Common myeloid progenitor, CD34-positive (primary cell): ENCODE measurements at regions of chr1 and their contacts with region 1.

Region 1: GRCh38 chr1:921011-921837 is 2.5 kb upstream of the SAMD11 start:
- DNase-seq: peak; percentile 77 to 88 (median 87)
- H3K4me3 ChIP-seq: peak overlapping the region in 4 of 7 experiments; percentile 6 to 42 (median 30)
- H3K27ac ChIP-seq: no peak overlapping the region
- H3K4me1 ChIP-seq: peaks cover 0 to 74% (median 62%) of the 10 kb centered on the region in 4 experiments
- H3K27me3 ChIP-seq: peaks cover 0 to 50% (median 14%) of the 10 kb centered on the region in 5 experiments

Region 2: DNA sequence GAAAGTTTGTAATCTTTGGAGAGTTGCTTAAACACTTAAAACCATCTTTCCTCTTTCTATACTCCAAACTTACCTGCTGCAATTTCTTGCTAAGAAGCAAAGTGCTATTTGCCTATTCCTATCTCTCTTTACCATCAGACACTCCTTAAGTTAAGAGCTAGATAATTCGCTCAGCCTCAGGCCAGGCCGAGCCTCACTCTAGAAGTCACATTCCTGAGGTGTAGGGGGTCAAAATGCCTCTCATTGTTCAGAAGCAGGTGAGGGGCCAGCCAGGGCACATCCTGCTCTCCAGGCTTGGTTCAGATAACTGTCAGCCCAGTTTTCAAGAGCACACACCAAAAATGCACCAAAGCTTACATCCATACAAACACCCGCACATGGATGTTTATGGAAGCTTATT is 75.6 kb before region 1 on chr1:
- CTCF ChIA-PET with region 1: no interaction called
- POLR2A ChIA-PET with region 1: no interaction called
- DNase-seq: no peak
- H3K4me3 ChIP-seq: no peak overlapping the region
- H3K27ac ChIP-seq: no peak overlapping the region
- H3K4me1 ChIP-seq: no peaks in the 10 kb centered on the region
- H3K27me3 ChIP-seq: no peaks in the 10 kb centered on the region

Region 3: GRCh38 chr1:886760-887159 is 34.5 kb before region 1 on chr1:
- CTCF ChIA-PET with region 1: no interaction called
- POLR2A ChIA-PET with region 1: no interaction called
- DNase-seq: no peak
- H3K4me3 ChIP-seq: no peak overlapping the region
- H3K27ac ChIP-seq: no peak overlapping the region
- H3K4me1 ChIP-seq: peaks cover 0 to 10% (median 6%) of the 10 kb centered on the region in 4 experiments
- H3K27me3 ChIP-seq: peaks cover 0 to 4% (median 0%) of the 10 kb centered on the region in 5 experiments

Region 4: GRCh38 chr1:904310-904950 is 16.8 kb before region 1 on chr1:
- CTCF ChIA-PET with region 1: interaction called, 23 read pairs
- POLR2A ChIA-PET with region 1: interaction called, 3 read pairs
- DNase-seq: peak; percentile 72 to 87 (median 87)
- H3K4me3 ChIP-seq: peak overlapping the region in 2 of 7 experiments; percentile 23 to 40
- H3K27ac ChIP-seq: no peak overlapping the region
- H3K4me1 ChIP-seq: peaks cover 5 to 36% (median 25%) of the 10 kb centered on the region in 4 experiments
- H3K27me3 ChIP-seq: peaks cover 0 to 50% (median 10%) of the 10 kb centered on the region in 5 experiments

Region 5: DNA sequence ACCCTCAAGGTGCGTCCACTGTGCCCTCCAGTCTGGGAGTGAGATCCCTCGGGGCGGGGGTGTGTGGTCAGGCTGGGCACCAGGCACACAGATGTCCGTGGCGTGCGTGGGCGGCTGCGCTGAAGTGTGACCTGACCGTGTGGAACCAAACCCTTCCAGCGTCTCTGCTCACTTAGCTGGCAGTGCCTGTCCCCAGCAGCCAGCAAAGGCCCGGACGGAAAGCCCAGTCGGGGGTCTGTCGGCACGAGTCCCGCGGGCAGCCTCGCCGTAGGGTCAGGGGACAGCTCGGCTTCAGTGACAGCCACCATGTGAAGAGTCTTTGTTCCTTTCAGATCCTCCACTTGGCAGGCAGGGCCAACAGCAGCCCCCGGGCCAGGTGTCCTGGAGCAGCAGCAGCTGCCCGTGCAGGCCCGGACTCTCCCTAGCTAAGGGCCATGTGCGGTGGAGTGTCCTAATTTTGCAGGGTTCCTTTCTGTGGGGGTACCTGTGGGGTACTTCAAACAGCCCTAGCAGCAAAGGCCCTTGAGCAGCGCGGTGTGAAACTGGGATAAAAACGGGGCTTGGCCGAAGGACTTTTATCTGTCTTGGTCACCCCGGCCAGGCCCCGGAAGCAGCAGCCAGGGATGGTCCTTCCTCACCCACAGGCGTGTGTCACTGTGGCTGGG is 264.0 kb after region 1 on chr1:
- CTCF ChIA-PET with region 1: no interaction called
- POLR2A ChIA-PET with region 1: no interaction called
- DNase-seq: no peak
- H3K4me3 ChIP-seq: no peak overlapping the region
- H3K27ac ChIP-seq: no peak overlapping the region
- H3K4me1 ChIP-seq: peaks cover 0 to 41% (median 25%) of the 10 kb centered on the region in 4 experiments
- H3K27me3 ChIP-seq: no peaks in the 10 kb centered on the region